ENCODE measurements at regions of chr2 and their contacts with region 1.

Region 1: DNA sequence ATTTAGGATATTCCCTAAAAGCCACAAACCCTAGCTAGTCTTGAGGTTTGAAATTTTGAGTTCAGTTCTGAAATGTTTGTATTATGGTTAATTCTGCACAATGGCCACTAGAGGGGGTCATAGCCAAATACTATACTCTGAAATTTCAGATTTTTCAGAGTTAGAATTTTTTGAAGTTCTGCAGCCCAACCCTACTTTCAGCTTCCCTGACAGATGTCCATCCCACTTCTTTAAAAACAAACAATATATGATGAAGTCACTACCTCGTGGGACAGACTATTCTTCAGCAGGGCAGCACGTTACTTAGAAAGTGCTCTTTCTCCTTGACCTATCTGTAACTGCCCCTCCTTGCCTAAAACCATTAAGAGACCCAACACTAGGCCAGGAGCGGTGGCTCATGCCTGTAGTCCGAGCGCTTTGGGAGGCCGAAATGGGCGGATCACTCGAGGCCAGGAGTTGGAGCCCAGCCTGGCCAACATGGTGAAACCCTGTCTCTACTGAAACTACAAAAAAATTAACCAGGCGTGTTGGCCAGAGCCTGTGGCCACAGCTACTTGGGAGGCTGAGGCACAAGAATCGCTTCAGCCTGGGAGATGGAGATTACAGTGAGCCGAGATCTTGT is 48.2 kb upstream of the PAPOLG start:
- DNase-seq: peak; percentile 23
- ATAC-seq: no peak
- H3K4me3 Mint-ChIP-seq: no peak overlapping the region
- H3K27ac Mint-ChIP-seq: no peak overlapping the region
- H3K4me1 Mint-ChIP-seq: peaks cover 3% of the 10 kb centered on the region
- H3K27me3 Mint-ChIP-seq: peaks cover 9% of the 10 kb centered on the region

Region 2: DNA sequence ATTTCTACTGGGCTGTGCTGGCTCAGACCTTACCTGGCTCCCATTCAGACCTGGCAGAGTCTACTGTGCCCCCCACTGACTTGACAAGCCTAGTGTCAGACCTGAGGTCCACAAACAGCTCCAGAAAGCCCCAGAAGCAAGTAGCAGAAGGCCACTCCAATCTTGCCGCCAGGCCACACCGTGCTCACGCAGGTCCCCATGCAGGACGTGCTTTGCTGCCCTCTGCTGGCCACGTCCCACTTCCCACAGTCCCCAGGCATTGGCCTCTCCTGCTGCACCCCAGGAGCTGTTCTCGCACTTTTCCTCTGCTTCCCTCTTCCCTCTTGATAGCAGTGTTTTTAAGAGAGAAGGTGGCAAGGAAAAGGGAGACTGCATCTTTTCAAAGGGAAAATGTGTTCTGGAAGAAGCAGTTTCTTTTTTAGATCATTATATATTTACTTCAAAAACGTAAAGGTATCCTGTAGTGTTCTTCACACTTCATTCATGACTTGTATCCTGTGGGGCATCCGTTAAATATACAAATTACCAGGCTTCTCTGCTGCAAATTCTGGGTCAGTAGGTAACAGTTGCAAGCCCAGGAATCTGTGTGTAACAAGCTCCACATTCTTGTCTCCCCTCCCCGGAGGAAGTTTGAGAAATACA is 33.2 kb before region 1 on chr2:
- CTCF ChIA-PET with region 1: interaction called, 10 read pairs
- POLR2A ChIA-PET with region 1: no interaction called
- DNase-seq: peak; percentile 88
- ATAC-seq: peak; percentile 100
- H3K4me3 Mint-ChIP-seq: no peak overlapping the region
- H3K27ac Mint-ChIP-seq: no peak overlapping the region
- H3K4me1 Mint-ChIP-seq: peaks cover 29% of the 10 kb centered on the region
- H3K27me3 Mint-ChIP-seq: peaks cover 8% of the 10 kb centered on the region

Region 3: GRCh38 chr2:60735496-60736250 is 27.8 kb after region 1 on chr2:
- CTCF ChIA-PET with region 1: interaction called, 14 read pairs
- POLR2A ChIA-PET with region 1: no interaction called
- DNase-seq: peak; percentile 72
- ATAC-seq: peak; percentile 85
- H3K4me3 Mint-ChIP-seq: peak overlapping the region; percentile 80
- H3K27ac Mint-ChIP-seq: peak overlapping the region; percentile 11
- H3K4me1 Mint-ChIP-seq: peaks cover 13% of the 10 kb centered on the region
- H3K27me3 Mint-ChIP-seq: peaks cover 24% of the 10 kb centered on the region

Region 4: GRCh38 chr2:60794277-60794863 is 86.5 kb after region 1 on chr2:
- CTCF ChIA-PET with region 1: interaction called, 10 read pairs
- POLR2A ChIA-PET with region 1: no interaction called
- DNase-seq: no peak
- ATAC-seq: no peak
- H3K4me3 Mint-ChIP-seq: no peak overlapping the region
- H3K27ac Mint-ChIP-seq: no peak overlapping the region
- H3K4me1 Mint-ChIP-seq: peaks cover 17% of the 10 kb centered on the region
- H3K27me3 Mint-ChIP-seq: no peaks in the 10 kb centered on the region

Region 5: DNA sequence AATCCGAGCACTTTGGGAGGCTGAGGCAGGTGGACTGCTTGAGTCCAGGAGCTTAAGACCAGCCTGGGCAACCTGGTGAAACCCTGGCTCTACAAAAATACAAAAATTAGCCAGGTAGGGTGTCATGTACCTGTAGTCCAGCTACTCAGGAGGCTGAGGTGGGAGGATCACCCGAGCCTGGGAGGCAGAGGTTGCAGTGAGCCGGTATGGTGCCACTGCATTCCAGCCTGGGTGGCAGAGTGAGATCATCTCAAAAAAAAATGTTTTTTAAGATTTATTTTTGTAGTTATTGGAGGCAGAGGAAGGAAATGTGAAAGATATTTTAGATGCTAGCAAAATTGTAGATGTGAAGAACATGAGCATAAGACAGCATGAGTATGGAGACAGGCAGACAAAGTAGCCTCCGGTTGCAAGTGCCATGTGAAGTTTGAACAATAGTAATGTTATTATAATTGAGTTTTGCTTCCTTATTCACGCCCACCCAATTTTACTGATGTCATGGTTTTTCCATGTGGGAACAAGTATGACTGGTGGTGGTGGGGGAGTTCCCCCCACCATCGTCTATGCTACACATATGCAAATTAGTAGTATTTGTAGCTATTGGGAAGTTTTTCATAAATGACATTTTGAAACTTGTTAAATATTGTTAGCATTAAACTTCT is 191.5 kb after region 1 on chr2:
- CTCF ChIA-PET with region 1: no interaction called
- POLR2A ChIA-PET with region 1: no interaction called
- DNase-seq: no peak
- ATAC-seq: no peak
- H3K4me3 Mint-ChIP-seq: no peak overlapping the region
- H3K27ac Mint-ChIP-seq: no peak overlapping the region
- H3K4me1 Mint-ChIP-seq: peaks cover 5% of the 10 kb centered on the region
- H3K27me3 Mint-ChIP-seq: no peaks in the 10 kb centered on the region

Measured in activated CD8-positive, alpha-beta T cell treated with anti-CD3 and anti-CD28 coated beads, Interleukin-2, amount 10 ng/mL, durations not matched to agents 7 days and 5 days (primary cell).